Esophagus muscularis mucosa (tissue), 4 donors: ENCODE measurements at regions of chr16 and their contacts with region 1.

Region 1: GRCh38 chr16:9232102-9232770 is 140.8 kb downstream of the HAPSTR1 start:
- DNase-seq: no peak
- H3K4me3 ChIP-seq: no peak overlapping the region
- H3K27ac ChIP-seq: no peak overlapping the region
- H3K4me1 ChIP-seq: no peaks in the 10 kb centered on the region
- H3K27me3 ChIP-seq: no peaks in the 10 kb centered on the region
- CTCF ChIP-seq: no peak
- EP300 ChIP-seq: no peak
- POLR2A ChIP-seq: no peak

Region 2: GRCh38 chr16:9102379-9102778 is 129.9 kb before region 1 on chr16:
- intact Hi-C with region 1: no loop called
- DNase-seq: no peak
- H3K4me3 ChIP-seq: no peak overlapping the region
- H3K27ac ChIP-seq: peak overlapping the region; percentile 6 to 54 (median 30)
- H3K4me1 ChIP-seq: peaks cover 99 to 100% (median 100%) of the 10 kb centered on the region in 4 donors
- H3K27me3 ChIP-seq: no peaks in the 10 kb centered on the region
- CTCF ChIP-seq: no peak
- EP300 ChIP-seq: no peak
- POLR2A ChIP-seq: no peak

Region 3: DNA sequence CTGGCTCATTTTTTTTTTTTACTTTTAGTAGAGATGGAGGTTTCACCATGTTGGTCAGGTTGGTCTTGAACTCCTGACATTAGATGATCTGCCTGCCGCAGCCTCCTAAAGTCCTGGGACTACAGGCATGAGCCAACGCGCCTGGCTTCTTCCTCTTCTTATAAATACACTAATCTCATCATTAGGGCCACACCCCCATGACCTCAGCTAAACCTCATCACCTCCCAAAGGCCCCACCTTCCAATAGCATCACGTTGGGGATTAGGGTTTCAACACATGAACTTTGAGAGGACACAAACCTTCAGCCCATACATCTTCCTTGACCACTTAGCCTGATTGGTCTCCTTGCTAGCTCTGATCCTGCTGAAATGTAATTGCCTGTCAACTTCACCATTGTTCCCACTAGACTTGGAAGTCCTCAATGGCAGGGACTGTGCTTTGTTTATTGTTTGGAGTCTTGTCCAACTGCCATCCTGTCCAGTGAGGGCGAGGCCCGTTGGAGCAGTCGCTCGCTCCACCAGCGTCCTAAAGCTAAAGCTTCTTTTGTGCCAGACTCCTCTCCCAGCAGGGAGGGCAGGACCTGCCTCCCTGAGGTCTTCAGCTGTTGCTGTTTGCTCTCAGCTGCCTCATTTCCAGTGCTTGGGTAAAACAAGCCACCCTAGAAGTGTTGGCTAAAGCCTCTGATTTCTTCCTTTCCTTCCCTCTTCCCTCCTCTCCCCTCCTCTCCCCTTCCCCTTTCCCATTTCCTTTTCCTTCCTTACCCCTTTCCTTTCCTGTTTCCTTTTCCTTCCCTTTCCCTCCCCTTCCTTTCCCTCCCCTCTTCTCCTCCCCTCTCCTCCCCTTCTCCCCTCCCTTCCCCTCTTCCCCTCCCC is 55.5 kb before region 1 on chr16:
- intact Hi-C with region 1: loop called (anchors 10 kb)
- DNase-seq: no peak
- H3K4me3 ChIP-seq: no peak overlapping the region
- H3K27ac ChIP-seq: no peak overlapping the region
- H3K4me1 ChIP-seq: no peaks in the 10 kb centered on the region
- H3K27me3 ChIP-seq: peaks cover 0 to 10% (median 0%) of the 10 kb centered on the region in 4 donors
- CTCF ChIP-seq: no peak
- EP300 ChIP-seq: no peak
- POLR2A ChIP-seq: no peak

Region 4: DNA sequence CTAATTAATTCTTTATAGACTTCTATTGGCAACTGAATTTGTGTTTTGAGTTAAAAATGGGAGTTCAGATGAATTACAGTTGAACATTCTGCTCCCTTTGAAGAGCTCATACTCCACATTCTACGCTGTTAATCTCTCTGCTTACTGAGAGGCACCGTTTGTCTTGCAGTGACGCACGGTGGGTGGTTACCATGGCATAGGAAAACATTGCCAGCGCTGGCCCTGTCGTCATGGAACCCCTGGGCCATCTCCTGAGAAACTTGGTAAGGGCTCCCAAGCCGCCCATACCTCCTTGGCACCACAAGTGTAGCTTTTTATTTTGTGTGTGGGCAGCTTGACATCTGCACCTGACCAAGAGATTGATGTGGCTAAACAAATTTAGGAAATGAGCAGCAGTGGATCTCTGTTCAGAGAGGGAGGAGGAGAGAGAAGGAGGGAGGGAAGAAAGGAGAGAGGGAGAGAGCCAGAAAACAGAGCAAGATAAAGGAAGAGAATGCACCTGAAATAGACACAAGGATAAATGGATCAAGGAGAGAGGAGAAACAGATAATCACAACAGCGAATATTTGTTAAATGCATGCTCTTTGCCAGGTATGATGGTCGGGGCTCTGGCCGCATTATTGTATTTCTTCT is 257.7 kb after region 1 on chr16:
- intact Hi-C with region 1: no loop called
- DNase-seq: no peak
- H3K4me3 ChIP-seq: no peak overlapping the region
- H3K27ac ChIP-seq: peak overlapping the region; percentile 67 to 81 (median 72)
- H3K4me1 ChIP-seq: peaks cover 4 to 26% (median 17%) of the 10 kb centered on the region in 4 donors
- H3K27me3 ChIP-seq: no peaks in the 10 kb centered on the region
- CTCF ChIP-seq: no peak
- EP300 ChIP-seq: no peak
- POLR2A ChIP-seq: no peak